Sigmoid colon (tissue), 7 donors: ENCODE measurements at regions of chr3 and their contacts with region 1.

Region 1: DNA sequence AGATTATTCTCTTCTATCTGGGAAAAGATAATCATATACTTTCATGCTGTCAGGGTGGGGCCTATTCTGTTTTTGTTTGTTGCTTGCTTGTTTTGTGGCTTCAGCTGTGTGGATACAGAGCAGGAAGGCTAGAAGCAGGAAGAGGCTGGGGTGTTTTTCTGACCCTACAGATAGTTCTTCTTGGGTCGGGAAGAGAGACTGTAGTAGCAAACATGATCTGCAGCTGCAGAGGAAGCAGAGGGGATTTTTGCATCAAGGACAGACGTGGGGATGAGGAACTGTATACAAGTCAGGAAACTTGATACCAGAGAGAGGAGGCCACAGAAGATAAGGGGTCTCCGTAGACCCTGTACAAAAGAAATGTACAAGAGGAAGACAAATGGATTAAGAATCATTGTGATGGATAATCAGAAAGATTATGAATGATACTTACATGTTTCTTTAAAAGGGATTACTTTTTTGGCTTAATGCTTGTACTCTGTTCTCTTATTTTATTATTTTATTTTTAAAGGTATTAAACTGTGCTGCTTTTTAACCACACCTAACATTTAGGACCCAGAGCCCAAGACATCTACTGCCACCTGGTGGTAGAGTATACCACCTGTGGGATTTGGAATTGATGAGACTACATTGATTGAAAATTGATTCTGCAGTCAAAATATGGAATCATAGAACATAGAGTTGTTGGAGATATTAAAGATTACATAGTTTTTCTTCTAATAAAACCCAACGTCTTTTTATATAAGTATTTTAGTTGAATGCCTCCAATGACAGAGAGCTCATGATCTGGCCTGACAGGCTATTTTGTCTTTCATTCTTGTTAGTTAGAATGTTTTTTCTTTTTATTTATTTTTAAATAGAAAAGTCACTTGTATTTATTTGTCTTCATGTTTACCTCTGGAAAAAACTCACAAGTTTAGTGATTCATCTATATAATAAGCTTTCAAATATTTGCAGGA is 87.3 kb upstream of the ROPN1 start:
- DNase-seq: no peak
- H3K4me3 ChIP-seq: no peak overlapping the region
- H3K27ac ChIP-seq: no peak overlapping the region
- H3K4me1 ChIP-seq: no peaks in the 10 kb centered on the region
- H3K27me3 ChIP-seq: no peaks in the 10 kb centered on the region
- CTCF ChIP-seq: peak in 3 of 4 experiments; percentile 37 to 68 (median 63)
- EP300 ChIP-seq: no peak
- POLR2A ChIP-seq: no peak

Region 2: DNA sequence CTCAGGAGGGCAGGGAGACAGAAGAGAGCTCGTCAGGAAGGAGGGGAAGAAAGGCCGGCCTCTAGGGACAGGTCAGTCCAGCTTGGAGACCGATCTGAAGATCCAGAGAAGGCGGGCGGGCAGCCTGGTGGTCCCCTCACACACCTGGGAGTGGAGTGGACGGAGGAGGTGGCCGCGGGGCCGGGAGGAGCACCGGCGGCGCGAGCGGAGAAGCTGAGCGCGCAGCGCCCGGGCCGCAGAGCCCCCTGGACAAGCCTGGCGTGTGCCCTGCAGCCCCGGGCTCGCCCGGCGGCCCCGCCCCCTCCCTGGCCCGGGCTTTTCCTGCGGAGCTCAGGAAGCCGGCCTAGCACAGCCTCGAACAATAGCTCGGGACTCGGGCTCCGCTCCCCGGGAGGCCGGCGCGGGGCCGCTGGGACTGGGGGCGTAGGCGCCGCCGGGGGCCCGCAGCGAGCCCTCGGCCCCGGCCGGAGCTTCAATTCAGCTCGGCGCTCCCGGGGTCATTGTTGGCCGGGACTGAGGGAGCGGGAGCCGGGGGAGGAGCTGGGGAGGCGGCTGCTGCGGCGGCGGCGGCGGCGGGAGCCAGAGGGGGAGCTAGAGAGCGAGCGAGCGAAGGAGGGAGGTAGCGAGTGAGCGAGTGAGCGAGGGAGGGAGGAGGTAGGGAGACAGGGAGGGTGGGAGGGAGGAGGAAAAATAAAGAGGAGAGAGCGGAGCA is 46.4 kb before region 1 on chr3:
- intact Hi-C with region 1: loop called (anchors 5 kb)
- DNase-seq: peak; percentile 91
- H3K4me3 ChIP-seq: peak overlapping the region; percentile 44 to 76 (median 73)
- H3K27ac ChIP-seq: peak overlapping the region; percentile 78 to 89 (median 81)
- H3K4me1 ChIP-seq: peaks cover 0 to 27% (median 21%) of the 10 kb centered on the region in 4 donors
- H3K27me3 ChIP-seq: peaks cover 5 to 18% (median 17%) of the 10 kb centered on the region in 3 donors
- CTCF ChIP-seq: peak; percentile 26 to 86 (median 36)
- EP300 ChIP-seq: no peak
- POLR2A ChIP-seq: no peak

Region 3: DNA sequence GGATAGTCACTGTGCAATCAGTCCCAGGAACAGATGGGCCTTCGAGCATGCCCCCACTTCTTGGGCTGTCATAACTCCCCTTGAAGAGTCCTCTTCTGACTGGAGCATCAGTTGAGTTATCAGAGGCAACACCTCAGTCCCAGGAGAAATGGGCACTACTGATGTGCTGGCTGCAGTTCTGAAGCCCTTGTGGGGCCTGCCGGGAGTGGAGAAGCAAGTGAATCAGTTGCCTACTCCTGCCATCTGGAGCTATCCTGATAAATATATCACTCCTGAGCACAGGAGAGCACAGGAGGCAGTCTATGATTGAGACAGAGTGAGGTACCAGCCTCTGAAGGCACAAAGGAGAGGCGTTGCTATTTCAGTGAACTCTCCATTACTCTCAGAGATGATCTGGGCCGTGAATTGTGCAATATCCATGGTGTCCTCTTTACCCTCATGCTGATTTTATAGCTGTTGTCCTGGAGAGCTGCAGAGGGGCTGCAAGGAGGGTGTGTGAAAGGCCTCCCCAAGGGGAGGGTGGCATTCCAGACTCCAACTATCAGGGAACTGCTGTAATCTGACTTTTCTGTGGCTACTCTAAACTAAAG is 256.9 kb after region 1 on chr3:
- intact Hi-C with region 1: no loop called
- DNase-seq: no peak
- H3K4me3 ChIP-seq: no peak overlapping the region
- H3K27ac ChIP-seq: no peak overlapping the region
- H3K4me1 ChIP-seq: no peaks in the 10 kb centered on the region
- H3K27me3 ChIP-seq: no peaks in the 10 kb centered on the region
- CTCF ChIP-seq: no peak
- EP300 ChIP-seq: no peak
- POLR2A ChIP-seq: no peak